Posterior cingulate gyrus (tissue), 11 donors: ENCODE measurements at regions of chr5 and their contacts with region 1.

Region 1: DNA sequence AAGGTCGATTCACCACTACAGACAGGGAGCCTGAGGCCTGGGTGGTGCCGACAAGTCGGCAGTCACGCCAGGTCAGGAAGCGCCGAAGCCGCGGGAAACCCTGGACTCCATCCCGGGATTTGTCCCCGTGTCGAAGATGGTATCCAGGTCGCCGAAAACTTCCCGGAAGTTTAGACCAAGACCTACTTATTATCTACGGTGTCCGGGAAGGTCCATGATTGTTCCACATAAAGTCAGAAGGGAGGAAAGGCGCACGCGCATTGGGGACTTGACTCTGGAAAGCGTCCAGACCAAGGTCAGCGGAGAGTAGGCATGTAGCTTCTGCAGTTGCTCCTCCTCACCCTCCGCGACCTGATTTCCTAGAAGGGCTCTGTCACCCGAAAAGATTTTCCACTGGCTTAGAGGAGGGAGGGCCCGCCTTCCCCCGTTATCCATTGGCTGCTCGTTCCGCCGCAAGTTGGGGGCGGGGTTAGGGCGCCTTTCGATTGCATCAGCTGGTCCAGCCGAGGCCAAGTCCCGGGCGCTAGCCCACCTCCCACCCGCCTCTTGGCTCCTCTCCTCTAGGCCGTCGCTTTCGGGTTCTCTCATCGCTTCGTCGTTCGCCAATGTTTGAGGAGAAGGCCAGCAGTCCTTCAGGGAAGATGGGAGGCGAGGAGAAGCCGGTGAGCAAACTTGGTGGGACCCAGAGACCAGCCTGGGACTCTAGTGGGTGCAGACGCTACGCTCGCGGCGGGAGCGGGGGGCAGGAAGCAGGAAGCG is at the start of gene TARS1:
- DNase-seq: peak; percentile 92 to 99 (median 94)

Region 2: DNA sequence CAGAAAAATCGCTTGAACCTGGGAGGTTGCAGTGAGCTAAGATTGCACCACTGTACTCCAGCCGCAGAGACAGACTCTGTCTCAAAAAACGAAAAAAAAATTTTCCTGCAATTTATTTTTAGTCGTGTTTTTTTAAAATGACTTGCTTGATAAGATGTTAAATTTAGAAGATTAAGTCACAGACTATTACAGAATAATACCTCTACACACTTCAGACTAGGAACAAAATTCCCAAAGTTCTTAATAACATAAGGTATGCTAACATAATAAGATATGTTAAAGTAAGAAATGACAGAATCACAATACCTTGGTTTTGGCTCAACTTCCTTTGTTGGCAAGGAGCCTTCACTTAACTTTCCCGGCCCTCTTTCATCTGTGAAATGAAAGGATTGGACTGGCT is 789.0 kb before region 1 on chr5:
- intact Hi-C with region 1: no loop called
- DNase-seq: no peak

Region 3: DNA sequence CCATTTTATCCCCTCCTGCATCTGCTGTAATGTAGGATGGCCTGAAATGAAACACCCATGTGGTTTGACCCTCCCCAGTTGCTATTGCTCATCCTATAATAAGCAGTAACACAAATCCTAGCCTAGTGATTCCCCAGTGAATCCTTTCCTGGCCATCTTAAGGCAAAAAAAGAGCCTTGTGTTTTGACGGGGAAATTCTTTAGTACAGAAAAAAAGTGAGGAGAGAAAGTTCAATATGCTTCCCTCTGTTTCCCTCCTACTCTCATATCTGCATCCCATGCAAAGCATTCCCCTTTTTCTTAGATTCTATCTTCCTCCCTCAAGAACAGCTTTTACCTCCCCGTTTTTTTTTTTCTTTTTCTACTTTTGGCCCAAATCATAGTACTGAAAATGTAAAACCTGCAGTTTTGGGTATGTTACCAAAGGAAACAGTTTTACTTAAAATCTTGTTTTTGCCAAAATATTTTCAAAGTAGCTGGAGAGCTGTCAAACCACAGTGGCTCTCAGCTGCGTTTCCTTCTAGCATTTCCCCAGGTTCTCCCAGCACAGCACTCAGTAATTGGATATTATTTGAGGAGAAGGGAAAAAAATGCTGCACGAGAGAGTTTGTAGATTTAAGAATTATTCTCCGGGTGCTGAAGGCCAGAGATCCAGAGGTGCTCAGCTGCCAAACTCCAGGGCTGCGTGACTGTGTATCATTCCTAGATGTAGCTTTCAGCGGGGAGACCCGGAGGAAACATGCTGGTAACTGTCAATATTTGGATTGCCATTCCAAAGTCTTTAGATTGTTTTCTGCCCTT is 408.2 kb before region 1 on chr5:
- intact Hi-C with region 1: no loop called
- DNase-seq: no peak

Region 4: DNA sequence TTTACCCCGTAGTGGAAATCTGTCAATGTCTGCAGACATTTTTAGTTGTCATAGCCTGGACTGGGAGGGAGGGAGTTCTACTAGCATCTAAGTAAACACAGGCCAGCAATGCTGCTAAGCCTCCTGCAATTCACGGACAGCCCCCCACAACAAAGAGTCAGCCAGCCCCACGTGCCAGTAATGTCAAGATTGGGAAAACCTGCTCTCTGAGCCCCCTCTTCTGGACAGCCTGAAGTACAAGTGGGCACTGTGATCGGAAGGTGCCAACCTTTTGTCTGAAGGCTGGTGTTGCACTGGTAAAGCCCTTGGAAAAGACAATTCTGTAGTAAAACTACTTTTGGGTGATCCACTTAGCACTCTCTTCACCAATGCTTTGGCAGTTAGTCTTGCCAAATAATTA is 154.6 kb after region 1 on chr5:
- intact Hi-C with region 1: loop called (anchors 10 kb)
- DNase-seq: no peak

Region 5: DNA sequence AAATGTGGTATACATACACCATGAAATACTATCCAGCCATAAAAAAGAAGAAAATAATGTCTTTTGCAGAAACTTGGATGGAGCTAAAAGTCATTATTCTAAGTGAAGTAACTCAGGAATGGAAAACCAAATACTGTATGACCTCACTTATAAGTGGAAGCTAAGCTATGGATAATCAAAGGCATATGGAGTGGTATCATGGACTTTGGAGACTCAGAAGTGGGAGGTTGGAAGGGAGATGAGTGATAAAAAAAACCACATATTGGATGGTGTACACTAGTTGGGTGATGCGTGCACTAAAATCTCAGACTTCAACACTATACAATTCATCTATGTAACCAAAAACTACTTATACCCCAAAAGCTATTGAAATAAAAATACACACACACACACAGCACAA is 426.6 kb after region 1 on chr5:
- intact Hi-C with region 1: no loop called
- DNase-seq: no peak

Region 6: DNA sequence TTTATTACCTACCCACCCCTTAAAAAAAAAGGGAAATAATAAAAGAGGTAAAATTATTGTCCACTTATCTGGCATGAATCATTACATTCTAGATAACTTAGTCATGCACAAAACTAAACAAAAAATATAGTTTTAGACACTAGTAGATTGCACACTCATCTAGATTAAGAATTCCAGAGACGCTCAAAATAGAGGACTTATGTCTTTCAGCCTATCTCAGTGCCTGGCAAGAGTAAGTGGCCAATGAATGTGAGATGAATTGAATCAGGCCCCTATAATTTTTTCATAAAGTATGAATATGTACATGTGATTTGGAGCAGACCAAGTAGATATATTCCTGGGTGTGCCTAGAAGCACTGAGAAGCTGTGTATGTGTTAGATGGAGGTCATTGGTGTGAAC is 493.5 kb after region 1 on chr5:
- intact Hi-C with region 1: loop called (anchors 2 kb)
- DNase-seq: no peak

Region 7: GRCh38 chr5:34007621-34008600 is 567.2 kb after region 1 on chr5 and contains the start of gene AMACR:
- intact Hi-C with region 1: loop called (anchors 5 kb)
- DNase-seq: peak; percentile 84 to 99 (median 90)